ENCODE measurements at regions of chrX and their contacts with region 1.

Region 1: GRCh38 chrX:140701480-140701879 is 8.1 kb upstream of the LINC00632 start:
- DNase-seq: peak in 1 of 10 donors; percentile 15

Region 2: DNA sequence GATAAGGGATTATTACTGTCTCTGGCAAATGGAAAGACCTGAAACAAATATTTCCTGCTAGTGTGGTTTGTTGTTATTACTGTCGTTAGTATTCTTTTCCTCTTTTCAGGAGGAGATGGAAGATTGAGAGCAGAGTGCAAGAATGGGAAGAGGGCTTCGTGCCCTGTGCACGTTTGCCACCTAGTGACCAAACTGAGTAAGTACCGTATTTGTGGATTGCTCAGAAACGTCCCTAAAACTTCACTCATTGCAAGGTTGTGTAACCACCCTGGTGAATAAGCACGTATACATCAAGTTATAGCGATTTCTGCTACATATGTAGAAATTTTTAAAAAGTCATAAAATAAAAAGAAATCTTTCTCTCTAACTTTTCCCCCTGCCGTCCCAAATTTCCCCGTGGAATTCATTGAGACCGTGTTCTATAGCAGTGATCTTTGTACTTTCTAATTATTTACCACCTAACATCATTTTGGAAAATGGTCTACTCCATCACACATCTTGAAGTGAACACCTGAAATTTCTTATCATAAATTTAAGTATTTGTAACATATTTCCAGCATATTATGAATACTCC is 32.4 kb after region 1 on chrX:
- intact Hi-C with region 1: loop called (anchors 2 kb)
- DNase-seq: peak in 4 of 10 donors; percentile 17 to 90 (median 24)

Region 3: DNA sequence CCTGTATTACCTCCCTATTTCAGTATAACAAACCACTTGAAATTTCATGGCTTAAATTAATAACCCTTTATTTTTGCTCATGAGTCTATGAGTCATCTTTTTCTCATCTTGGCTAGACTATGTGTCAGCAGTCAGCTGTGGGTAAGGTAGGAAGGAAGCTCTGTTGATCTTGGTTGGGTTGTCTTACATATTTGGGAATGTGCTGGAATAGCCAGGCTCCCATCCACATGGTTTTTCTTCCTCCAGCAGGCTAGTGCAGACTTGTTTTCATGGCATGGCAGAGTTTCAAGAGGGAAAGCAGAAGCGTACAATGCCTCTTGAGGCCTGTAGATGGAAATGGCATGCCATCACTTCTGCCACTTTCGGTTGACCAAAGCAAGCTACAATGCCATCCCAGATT is 97.7 kb after region 1 on chrX:
- intact Hi-C with region 1: no loop called
- DNase-seq: no peak